CD4-positive, alpha-beta memory T cell (primary cell): ENCODE measurements at regions of chr2 and their contacts with region 1.

Region 1: GRCh38 chr2:197310271-197310985 is at the start of gene ANKRD44:
- DNase-seq: peak; percentile 91 to 94 (median 94)
- H3K4me3 ChIP-seq: peak within 1 kb of the TSS; percentile 65 to 87
- H3K4me3 Mint-ChIP-seq: peak within 1 kb of the TSS; percentile 91 to 97 (median 95)
- H3K27ac ChIP-seq: peak within 1 kb of the TSS; percentile 93
- H3K27ac Mint-ChIP-seq: peak within 1 kb of the TSS; percentile 94 to 97 (median 96)
- H3K4me1 ChIP-seq: peaks cover 55% of the 10 kb centered on the region
- H3K4me1 Mint-ChIP-seq: peaks cover 46 to 74% (median 56%) of the 10 kb centered on the region in 4 donors
- H3K27me3 ChIP-seq: no peaks in the 10 kb centered on the region
- H3K27me3 Mint-ChIP-seq: no peaks in the 10 kb centered on the region
- total RNA-seq, gene ANKRD44: 229 to 248 TPM

Region 2: GRCh38 chr2:197191177-197191939 is 119.1 kb before region 1 on chr2:
- CTCF ChIA-PET with region 1: interaction called, 146 read pairs
- POLR2A ChIA-PET with region 1: interaction called, 1,065 read pairs
- intact Hi-C with region 1: loop called (anchors 1 kb)
- DNase-seq: peak in 4 of 5 donors; percentile 69 to 75 (median 74)
- H3K4me3 ChIP-seq: no peak overlapping the region
- H3K4me3 Mint-ChIP-seq: peak overlapping the region in 7 of 8 donors; percentile 27 to 73 (median 60)
- H3K27ac ChIP-seq: peak overlapping the region; percentile 77
- H3K27ac Mint-ChIP-seq: peak overlapping the region; percentile 64 to 93 (median 89)
- H3K4me1 ChIP-seq: peaks cover 90% of the 10 kb centered on the region
- H3K4me1 Mint-ChIP-seq: peaks cover 64 to 85% (median 73%) of the 10 kb centered on the region in 4 donors
- H3K27me3 ChIP-seq: no peaks in the 10 kb centered on the region
- H3K27me3 Mint-ChIP-seq: no peaks in the 10 kb centered on the region

Region 3: DNA sequence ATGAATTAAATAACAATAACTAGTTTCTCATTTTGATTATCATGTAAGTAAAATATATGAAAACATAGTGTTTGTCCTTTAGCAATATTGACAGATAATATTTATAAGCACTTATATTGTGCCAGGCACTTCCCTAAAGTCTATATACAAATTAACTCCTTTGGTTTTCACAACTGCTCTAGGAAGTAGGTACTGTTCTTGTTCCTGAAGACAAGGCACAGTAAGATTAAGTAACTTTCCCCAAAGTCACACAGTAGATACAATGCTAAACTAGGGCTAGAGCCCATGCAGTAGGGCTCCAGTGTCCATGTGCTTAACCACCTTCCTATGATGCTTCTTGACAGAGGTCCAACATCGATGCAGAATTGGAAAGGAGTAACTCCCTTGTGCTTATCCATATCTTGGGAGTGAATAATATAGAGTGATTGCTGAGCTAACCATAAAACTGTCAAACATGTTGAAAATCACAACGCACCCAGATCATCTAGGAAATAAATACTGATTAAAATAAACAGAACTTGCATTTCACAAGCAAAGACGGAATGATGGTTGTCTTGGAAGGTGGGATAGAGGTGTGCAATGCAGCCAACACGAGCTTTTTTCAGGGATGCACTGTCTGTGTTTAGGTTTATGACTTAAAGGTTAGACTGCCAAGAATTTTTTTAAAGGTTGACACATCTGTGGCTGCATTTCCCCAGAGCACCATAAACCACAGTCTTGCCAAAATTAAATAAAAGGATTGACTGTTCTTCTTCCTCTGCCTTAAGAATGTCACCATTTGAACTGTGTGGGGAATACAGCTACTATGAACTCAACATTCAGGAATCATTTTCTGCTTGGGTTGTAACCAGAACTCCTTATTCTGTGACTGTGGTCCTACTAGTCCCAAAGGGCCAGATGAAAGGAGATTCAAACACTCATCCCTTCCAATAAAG is 80.7 kb before region 1 on chr2:
- CTCF ChIA-PET with region 1: interaction called, 8 read pairs
- POLR2A ChIA-PET with region 1: interaction called, 606 read pairs
- intact Hi-C with region 1: no loop called
- DNase-seq: no peak
- H3K4me3 ChIP-seq: no peak overlapping the region
- H3K4me3 Mint-ChIP-seq: peak overlapping the region in 5 of 8 donors; percentile 11 to 71 (median 29)
- H3K27ac ChIP-seq: no peak overlapping the region
- H3K27ac Mint-ChIP-seq: peak overlapping the region; percentile 22 to 65 (median 38)
- H3K4me1 ChIP-seq: peaks cover 99% of the 10 kb centered on the region
- H3K4me1 Mint-ChIP-seq: peaks cover 65 to 98% (median 85%) of the 10 kb centered on the region in 4 donors
- H3K27me3 ChIP-seq: no peaks in the 10 kb centered on the region
- H3K27me3 Mint-ChIP-seq: no peaks in the 10 kb centered on the region

Region 4: GRCh38 chr2:197261808-197262226 is 48.6 kb before region 1 on chr2:
- CTCF ChIA-PET with region 1: interaction called, 24 read pairs
- POLR2A ChIA-PET with region 1: interaction called, 606 read pairs
- intact Hi-C with region 1: loop called (anchors 2 kb)
- DNase-seq: peak in 1 of 5 donors; percentile 33
- H3K4me3 ChIP-seq: no peak overlapping the region
- H3K4me3 Mint-ChIP-seq: peak overlapping the region; percentile 43 to 82 (median 64)
- H3K27ac ChIP-seq: peak overlapping the region; percentile 65
- H3K27ac Mint-ChIP-seq: peak overlapping the region; percentile 76 to 98 (median 91)
- H3K4me1 ChIP-seq: peaks cover 87% of the 10 kb centered on the region
- H3K4me1 Mint-ChIP-seq: peaks cover 65 to 91% (median 77%) of the 10 kb centered on the region in 4 donors
- H3K27me3 ChIP-seq: no peaks in the 10 kb centered on the region
- H3K27me3 Mint-ChIP-seq: no peaks in the 10 kb centered on the region

Region 5: DNA sequence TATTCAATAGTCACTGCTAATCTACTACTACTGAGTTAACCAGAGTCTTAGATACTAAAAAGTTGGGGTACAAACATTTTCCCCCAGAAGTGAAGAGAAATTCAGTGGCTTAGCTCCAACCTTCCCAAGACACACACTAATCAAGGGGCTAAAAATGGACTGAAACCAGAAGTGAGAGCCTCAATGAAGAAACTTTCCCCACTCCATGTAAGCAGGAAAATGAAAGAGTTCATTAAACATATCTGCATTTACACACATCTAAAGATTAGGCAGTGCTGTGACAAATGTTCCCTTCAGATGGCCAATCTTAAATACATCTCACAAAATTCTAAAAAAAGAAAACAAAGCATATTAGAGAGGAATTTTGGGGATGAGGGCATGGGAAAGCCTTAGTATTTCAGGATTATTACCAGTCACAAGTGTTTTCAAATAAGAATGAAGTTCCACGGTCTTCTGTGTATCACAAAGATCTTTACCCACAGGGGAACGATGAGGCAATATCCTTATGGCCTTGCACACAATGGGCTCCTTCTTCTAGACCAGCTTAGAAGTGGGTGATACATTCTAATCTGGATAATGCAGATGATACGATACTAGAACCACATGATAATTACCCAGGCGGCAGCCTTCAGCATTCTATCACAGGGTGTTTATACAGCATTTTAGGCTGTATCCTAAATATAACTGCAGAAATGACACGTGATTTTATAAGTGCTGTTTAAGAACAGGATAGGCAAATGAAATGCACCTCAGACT is 17.0 kb before region 1 on chr2:
- CTCF ChIA-PET with region 1: interaction called, 39 read pairs
- POLR2A ChIA-PET with region 1: interaction called, 265 read pairs
- intact Hi-C with region 1: loop called (anchors 2 kb)
- DNase-seq: peak; percentile 41 to 79 (median 43)
- H3K4me3 ChIP-seq: peak overlapping the region in 1 of 2 donors; percentile 15
- H3K4me3 Mint-ChIP-seq: peak overlapping the region; percentile 77 to 87 (median 82)
- H3K27ac ChIP-seq: peak overlapping the region; percentile 69
- H3K27ac Mint-ChIP-seq: peak overlapping the region; percentile 90 to 99 (median 96)
- H3K4me1 ChIP-seq: peaks cover 100% of the 10 kb centered on the region
- H3K4me1 Mint-ChIP-seq: peaks cover 69 to 94% (median 84%) of the 10 kb centered on the region in 4 donors
- H3K27me3 ChIP-seq: no peaks in the 10 kb centered on the region
- H3K27me3 Mint-ChIP-seq: no peaks in the 10 kb centered on the region

Region 6: DNA sequence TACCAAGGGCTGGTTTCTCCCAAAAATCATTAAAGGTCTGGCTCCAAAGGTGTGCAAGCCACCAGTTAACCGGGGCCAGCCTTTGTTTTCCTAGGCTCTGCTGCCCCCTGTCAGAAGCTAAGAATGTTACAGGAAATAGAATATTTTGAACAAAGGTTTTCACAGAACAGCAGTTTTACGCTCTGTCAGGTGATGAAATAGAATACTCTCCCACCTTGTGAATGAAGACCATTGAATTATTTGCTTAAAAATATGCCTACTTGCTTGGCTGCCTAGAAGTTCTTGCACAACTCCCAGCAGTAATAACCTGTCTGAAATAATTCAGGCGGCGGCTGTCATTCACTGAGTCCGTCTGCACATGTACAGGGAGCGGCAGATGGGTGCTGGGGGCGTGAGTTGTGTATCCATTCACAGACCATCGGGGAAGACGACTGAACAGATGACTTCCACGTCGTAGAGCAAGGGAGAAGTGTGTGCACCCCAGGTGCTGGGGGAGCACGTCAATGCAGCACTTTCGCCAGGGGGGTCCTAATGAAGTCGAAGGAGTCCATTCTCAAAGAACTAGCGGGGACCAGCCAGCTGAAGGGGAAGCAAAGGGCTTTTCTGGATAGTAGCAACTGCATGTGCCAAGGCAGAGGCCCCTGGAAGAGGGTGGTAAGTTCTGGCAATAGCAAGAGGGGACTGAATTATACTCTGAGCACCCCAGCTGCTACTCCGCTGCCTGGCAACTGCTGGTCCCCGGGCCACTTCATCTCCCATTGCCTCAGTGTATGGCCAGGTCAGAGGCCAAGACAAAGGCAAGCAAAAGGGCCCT is 68.3 kb after region 1 on chr2:
- CTCF ChIA-PET with region 1: interaction called, 7 read pairs
- POLR2A ChIA-PET with region 1: interaction called, 5 read pairs
- intact Hi-C with region 1: loop called (anchors 1 kb)
- DNase-seq: peak; percentile 60 to 69 (median 63)
- H3K4me3 ChIP-seq: no peak overlapping the region
- H3K4me3 Mint-ChIP-seq: no peak overlapping the region
- H3K27ac ChIP-seq: no peak overlapping the region
- H3K27ac Mint-ChIP-seq: peak overlapping the region in 2 of 7 donors; percentile 0 to 52
- H3K4me1 ChIP-seq: peaks cover 8% of the 10 kb centered on the region
- H3K4me1 Mint-ChIP-seq: peaks cover 5 to 12% (median 10%) of the 10 kb centered on the region in 4 donors
- H3K27me3 ChIP-seq: no peaks in the 10 kb centered on the region
- H3K27me3 Mint-ChIP-seq: peaks cover 1 to 3% of the 10 kb centered on the region in 2 donors

Region 7: GRCh38 chr2:197538412-197538811 is 228.0 kb after region 1 on chr2:
- CTCF ChIA-PET with region 1: no interaction called
- POLR2A ChIA-PET with region 1: no interaction called
- intact Hi-C with region 1: no loop called
- DNase-seq: no peak
- H3K4me3 ChIP-seq: no peak overlapping the region
- H3K4me3 Mint-ChIP-seq: no peak overlapping the region
- H3K27ac ChIP-seq: no peak overlapping the region
- H3K27ac Mint-ChIP-seq: peak overlapping the region in 4 of 7 donors; percentile 1 to 74 (median 57)
- H3K4me1 ChIP-seq: peaks cover 23% of the 10 kb centered on the region
- H3K4me1 Mint-ChIP-seq: peaks cover 25 to 41% (median 32%) of the 10 kb centered on the region in 4 donors
- H3K27me3 ChIP-seq: no peaks in the 10 kb centered on the region
- H3K27me3 Mint-ChIP-seq: no peaks in the 10 kb centered on the region